AG04450 (cell line): ENCODE measurements at regions of chr7 and their contacts with region 1.

Region 1: DNA sequence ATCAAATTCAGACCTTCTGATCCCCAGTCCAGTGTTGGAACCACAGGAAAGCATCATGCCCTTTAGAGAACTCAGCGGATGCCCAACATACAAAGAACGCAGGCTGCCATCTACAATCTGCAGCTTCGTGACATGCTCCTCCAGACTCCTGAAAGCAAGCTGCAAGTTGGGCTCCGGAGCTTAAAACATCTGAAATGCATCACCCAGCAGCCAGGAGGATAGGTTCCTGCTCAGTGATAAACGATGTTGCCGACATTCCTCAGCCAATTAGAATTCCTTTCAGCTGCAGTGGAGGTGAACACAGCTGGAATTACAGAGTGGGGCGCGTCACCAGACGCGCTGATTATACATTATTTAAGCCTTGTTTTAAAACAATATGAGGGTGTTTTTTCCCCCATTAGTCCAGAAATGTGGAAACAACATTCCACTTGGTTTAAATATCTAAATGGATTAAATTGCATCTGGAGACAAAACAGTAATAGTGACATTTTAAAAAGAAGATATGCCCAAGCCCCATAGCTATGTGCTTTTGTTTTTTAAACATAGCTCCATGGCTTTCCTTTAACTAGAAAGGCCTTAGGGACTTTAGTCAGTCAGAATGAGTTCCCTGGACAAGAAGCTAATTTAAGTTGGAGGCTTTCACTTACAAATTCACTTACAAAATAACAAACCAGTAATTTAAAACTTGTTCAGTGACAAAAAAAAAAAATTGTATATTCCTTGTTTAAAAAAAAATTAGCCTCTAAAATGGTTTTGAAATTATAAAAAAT is 6.3 kb downstream of the SMURF1 start:
- DNase-seq: peak; percentile 79
- H3K4me3 ChIP-seq: peak overlapping the region; percentile 53
- H3K27ac ChIP-seq: peak overlapping the region; percentile 58
- H3K27me3 ChIP-seq: no peaks in the 10 kb centered on the region
- CTCF ChIP-seq: peak; percentile 27; the same call in 1 of the 2 replicates

Region 2: DNA sequence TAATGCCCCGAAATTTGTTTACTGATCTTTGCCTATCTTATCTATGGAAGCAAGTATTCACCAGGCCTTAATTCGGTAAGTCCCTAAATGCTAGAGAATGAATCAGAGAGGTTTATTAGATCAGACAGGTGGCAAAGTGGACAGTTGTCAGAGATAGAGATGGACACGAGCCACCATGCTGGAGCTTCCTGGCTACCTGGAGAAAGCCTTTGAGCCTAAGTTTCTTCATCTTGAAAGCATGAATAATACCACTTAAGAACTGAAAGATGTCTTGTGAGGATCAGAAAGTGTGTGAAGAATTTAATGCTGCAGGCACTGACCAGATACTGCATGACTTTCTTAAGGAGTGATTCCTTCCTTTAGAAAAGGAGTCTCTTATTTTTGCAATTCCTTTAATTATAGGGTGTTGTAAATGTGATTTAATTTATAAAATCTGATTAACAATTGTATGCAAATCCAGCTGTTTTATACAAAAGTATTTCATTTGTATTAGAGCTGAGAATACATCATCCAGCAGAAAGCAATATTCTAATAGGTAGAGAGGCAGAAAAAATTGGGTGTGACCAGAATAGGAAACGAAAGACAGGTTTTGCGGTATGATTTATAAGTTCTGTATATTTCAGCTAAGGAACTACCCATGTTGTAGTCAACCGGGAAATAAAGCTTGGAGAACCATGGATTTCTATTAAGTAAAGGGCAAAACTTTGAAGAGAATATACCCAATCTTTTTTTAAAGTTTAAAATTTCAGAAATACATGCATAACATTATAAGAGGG is 76.4 kb before region 1 on chr7:
- CTCF ChIA-PET with region 1: interaction called, 11 read pairs
- POLR2A ChIA-PET with region 1: interaction called, 3 read pairs
- DNase-seq: no peak
- H3K4me3 ChIP-seq: no peak overlapping the region
- H3K27ac ChIP-seq: no peak overlapping the region
- H3K27me3 ChIP-seq: no peaks in the 10 kb centered on the region
- CTCF ChIP-seq: no peak